ENCODE measurements at regions of chr4 and their contacts with region 1.

Region 1: DNA sequence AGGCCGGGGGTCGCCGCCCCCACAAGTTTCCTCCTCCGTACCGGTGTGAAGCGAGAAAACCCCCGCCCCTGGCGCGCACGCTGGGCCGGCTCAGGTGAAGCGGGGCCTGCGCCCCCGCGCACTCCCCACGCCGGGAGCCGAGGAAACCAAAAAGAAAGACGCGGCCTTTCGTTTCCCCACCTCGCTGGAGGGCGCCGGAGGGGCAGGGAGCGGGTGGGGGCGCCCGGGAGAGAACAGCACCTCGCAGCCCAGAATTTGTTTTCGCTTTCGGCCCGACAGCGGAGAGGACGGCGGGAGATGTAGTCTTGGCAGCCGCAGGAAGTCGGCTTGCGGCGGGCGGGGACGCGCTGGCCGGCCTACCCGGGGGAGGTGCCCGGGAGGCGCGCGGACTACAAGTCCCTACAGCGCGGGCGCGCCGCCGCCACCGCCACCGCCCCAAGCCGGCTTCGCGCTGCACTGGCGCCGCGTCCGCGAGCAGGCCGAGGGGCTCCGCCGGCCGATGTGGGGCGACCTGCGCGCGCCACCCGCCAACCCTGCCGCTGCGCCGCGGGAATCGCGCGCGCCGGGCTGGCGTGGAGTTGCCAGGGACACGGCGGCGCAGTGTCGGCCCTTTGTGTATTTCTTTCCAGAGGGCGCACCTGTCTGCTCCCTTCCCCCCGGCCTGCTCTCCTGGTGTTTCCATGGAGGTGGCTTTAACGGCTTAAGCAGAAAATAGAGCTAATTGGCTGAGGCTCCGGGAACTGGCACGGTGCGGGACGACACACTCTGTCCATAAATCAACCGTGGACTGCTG is at the start of gene OTUD4:
- DNase-seq: peak; percentile 98
- H3K4me3 Mint-ChIP-seq: peak within 1 kb of the TSS; percentile 95
- H3K27ac Mint-ChIP-seq: peak within 1 kb of the TSS; percentile 97
- H3K4me1 Mint-ChIP-seq: peaks cover 24% of the 10 kb centered on the region
- H3K27me3 Mint-ChIP-seq: peaks cover 3% of the 10 kb centered on the region
- total RNA-seq, gene OTUD4: 81.2 and 86.4 TPM in 2 replicates

Region 2: DNA sequence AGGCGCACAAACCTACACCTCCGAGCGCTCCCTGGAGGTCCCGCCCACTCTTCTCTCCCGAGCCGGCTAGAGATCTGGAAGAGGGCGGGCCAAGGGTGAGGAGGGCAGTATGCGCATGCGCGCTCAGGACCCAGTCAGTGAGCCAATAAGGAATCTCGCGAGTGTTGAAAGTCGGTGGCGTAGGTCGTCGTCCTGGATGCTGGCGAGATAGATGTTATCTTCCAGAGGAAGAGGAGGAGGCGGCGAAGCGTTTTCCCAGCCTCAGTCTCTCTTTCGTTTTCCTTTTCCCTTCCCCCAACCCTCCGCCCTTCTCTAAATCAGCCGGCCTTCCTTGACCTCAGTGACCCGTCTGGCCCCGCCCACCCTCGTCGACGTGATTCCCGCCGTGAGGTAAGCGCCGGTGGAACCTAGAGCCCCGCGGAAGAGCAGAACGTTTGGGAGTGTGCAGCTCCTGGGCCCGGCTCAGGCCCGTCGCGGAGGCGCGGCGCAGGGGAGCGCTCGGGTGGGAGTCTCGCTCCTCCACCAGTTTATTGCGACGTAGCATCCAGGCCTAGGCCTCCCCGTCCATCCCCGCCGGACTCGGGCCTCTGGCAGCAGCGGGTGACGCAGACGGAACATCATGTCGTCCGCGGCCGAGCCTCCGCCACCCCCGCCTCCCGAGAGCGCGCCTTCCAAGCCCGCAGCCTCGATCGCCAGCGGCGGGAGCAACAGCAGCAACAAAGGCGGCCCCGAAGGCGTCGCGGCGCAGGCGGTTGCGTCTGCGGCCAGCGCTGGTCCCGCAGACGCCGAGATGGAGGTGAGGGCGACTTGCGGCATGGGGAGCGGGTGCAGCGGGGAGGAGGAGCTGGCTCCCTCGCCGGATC is 1667.0 kb before region 1 on chr4 and contains the start of gene SMARCA5:
- intact Hi-C with region 1: loop called (anchors 1 kb)
- DNase-seq: peak; percentile 98
- H3K4me3 Mint-ChIP-seq: peak within 1 kb of the TSS; percentile 100
- H3K27ac Mint-ChIP-seq: peak within 1 kb of the TSS; percentile 97
- H3K4me1 Mint-ChIP-seq: peaks cover 25% of the 10 kb centered on the region
- H3K27me3 Mint-ChIP-seq: peaks cover 14% of the 10 kb centered on the region
- total RNA-seq, gene SMARCA5: 59.0 and 60.6 TPM in 2 replicates

Region 3: DNA sequence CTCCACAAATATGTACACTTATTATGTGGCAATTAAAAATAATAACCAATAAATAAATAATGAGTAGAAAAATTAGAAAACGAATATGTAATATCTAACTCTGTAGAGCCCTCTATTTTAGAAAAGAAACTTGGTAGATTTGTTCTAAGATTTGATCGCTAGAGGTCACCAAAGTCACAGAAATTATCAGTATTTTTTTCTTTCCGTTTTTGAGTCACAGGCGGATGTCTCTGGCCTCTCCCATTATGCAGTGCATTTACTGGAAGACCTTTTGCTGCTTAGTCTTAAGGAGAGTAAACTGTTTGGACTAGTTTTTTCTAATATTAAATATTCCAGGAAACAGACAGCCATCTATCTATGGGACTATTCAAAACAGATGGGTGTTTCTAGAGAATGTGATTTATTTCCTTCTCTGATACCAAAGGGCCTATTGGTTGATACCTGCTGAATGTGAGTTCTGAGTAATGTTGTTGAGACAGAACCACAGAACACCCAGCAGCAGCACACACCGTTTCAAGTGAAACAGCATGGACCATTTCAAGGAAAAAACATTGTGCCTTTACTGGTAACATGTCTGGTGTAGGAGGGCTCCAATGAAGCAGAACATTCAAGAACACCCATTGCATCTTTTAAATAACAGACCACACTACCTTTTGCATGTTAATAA is 1006.0 kb before region 1 on chr4:
- intact Hi-C with region 1: loop called (anchors 10 kb)
- DNase-seq: peak; percentile 78
- H3K4me3 Mint-ChIP-seq: peak overlapping the region; percentile 45
- H3K27ac Mint-ChIP-seq: peak overlapping the region; percentile 86
- H3K4me1 Mint-ChIP-seq: peaks cover 19% of the 10 kb centered on the region
- H3K27me3 Mint-ChIP-seq: peaks cover 10% of the 10 kb centered on the region

Region 4: GRCh38 chr4:145130788-145131399 is 49.6 kb before region 1 on chr4:
- intact Hi-C with region 1: loop called (anchors 2 kb)
- DNase-seq: peak; percentile 70
- H3K4me3 Mint-ChIP-seq: peak overlapping the region; percentile 43
- H3K27ac Mint-ChIP-seq: peak overlapping the region; percentile 83
- H3K4me1 Mint-ChIP-seq: peaks cover 68% of the 10 kb centered on the region
- H3K27me3 Mint-ChIP-seq: no peaks in the 10 kb centered on the region

Region 5: DNA sequence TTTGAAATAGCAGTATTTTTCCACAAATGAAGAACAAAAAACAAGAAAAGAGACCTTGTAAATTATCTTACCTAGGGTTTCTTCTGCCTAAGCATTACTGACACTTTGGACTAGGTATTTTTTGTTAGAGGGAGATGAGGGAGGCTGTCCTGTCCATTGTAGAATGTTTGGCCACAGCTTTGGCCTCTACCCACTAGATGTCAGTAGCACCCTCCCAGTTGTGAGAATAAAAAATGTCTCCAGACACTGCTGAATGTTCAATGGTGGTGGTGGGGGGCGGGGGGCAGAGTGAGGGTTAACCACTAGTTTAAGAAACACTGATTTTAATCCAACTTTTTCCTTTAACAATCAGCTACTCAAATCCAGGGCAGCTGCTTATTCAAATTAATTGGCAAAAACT is 25.9 kb before region 1 on chr4:
- intact Hi-C with region 1: no loop called
- DNase-seq: no peak
- H3K4me3 Mint-ChIP-seq: no peak overlapping the region
- H3K27ac Mint-ChIP-seq: no peak overlapping the region
- H3K4me1 Mint-ChIP-seq: peaks cover 26% of the 10 kb centered on the region
- H3K27me3 Mint-ChIP-seq: no peaks in the 10 kb centered on the region

Region 6: GRCh38 chr4:145732895-145733880 is 552.7 kb after region 1 on chr4:
- intact Hi-C with region 1: loop called (anchors 5 kb)
- DNase-seq: peak; percentile 96
- H3K4me3 Mint-ChIP-seq: peak overlapping the region; percentile 77
- H3K27ac Mint-ChIP-seq: peak overlapping the region; percentile 76
- H3K4me1 Mint-ChIP-seq: peaks cover 18% of the 10 kb centered on the region
- H3K27me3 Mint-ChIP-seq: peaks cover 2% of the 10 kb centered on the region

Region 7: DNA sequence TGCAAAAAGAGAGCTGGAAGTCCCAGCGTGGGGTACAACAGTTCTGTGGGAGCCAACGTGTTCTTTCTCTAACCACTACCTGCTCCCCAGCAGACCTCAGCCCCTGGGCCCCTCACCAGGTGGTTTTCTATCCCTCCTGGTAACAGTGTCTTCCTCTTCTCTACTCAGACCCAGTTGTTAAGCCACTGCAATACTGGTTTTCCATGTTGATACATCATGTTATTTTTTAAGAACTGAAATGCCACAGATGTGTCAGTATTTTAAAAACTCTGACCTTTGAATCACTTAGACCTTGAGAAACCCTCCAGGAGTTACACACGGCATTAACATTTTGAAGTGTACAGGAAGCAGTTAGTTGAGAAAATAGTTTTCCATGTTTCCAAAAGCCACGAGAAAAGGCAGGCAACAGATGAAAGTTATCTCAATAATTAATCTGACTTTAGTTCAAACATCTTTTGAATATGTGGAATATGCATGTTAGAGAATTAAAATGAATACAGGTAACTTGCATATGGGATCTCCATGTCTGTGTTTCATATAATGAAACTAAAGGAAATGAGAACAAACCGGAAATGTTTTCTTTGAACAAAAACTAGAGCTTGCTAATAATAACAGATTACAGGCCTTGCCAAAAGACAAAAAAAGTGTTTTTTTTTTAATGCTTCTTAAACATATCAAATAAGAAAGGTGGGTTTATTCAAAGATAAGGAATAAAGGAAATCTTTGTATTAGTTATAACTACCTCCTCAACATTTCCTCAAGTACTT is 649.3 kb after region 1 on chr4:
- intact Hi-C with region 1: loop called (anchors 1 kb)
- DNase-seq: peak; percentile 70
- H3K4me3 Mint-ChIP-seq: peak overlapping the region; percentile 76
- H3K27ac Mint-ChIP-seq: peak overlapping the region; percentile 87
- H3K4me1 Mint-ChIP-seq: peaks cover 43% of the 10 kb centered on the region
- H3K27me3 Mint-ChIP-seq: no peaks in the 10 kb centered on the region

Measured in activated CD4-positive, alpha-beta T cell treated with anti-CD3 and anti-CD28 coated beads, Interleukin-2, amount 10 ng/mL, durations not matched to agents 24 days and 14 days (primary cell).